ENCODE measurements at regions of chr12 and their contacts with region 1.

Region 1: GRCh38 chr12:121668750-121669520 is 519 bp downstream of the MORN3 start:
- DNase-seq: no peak
- H3K4me3 ChIP-seq: no peak overlapping the region
- H3K27me3 ChIP-seq: no peaks in the 10 kb centered on the region
- CTCF ChIP-seq: peak; percentile 70

Region 2: GRCh38 chr12:121536899-121537813 is 131.8 kb before region 1 on chr12:
- CTCF ChIA-PET with region 1: interaction called, 10 read pairs
- POLR2A ChIA-PET with region 1: no interaction called
- DNase-seq: no peak
- H3K4me3 ChIP-seq: peak overlapping the region; percentile 43
- H3K27me3 ChIP-seq: no peaks in the 10 kb centered on the region
- CTCF ChIP-seq: no peak

Region 3: DNA sequence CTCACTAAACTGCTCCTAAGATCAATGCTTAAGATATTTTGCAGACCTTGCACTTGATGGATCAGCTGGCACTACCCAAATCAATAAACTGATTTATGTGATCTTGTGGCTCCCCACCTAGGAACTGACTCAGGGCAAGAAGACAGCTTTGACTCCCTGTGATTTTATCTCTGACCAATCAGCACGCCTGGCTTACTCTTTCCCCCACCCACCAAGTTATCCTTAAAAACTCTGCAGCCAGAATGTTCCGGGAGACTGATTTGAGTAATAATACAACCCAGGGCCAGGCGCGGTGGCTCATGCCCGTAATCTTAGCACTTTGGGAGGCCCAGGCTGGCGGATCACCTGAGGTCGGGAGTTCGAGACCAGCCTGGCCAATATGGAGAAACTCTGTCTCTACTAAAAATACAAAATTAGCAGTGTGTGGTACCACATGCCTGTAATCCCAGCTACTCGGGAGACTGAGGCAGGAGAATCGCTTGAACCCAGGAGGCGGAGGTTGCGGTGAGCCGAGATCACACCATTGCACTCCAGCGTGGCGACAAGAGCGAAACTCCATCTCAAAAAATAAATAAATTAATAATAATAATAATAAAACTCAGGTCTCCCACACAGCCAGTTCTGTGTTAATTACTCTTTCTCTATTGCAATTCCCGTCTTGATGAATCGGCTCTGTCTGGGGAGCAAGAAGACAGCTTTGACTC is 11.5 kb before region 1 on chr12:
- CTCF ChIA-PET with region 1: interaction called, 21 read pairs
- POLR2A ChIA-PET with region 1: no interaction called
- DNase-seq: no peak
- H3K4me3 ChIP-seq: no peak overlapping the region
- H3K27me3 ChIP-seq: no peaks in the 10 kb centered on the region
- CTCF ChIP-seq: no peak

Measured in BJ (cell line).